ENCODE measurements at regions of chr7 and their contacts with region 1.

Region 1: DNA sequence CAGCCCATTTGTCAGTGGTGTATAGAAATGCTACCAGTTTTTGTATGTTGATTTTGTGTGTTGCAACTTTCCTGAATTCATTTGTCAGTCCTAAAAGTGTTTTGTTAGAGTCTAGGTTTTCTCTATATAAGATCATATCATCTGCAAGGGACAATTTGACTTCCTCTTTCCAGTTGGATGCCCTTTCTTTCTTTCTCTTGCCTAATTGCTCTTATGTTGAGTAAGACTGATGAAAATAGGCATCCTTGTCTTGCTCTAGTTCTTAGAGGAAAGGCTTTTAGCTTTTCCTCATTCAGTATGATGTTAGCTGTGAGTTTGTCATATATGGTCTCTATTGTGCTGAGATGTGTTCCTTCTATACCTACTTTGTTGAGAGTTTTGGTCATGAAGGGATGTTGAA is 161.7 kb upstream of the TPK1 start:
- DNase-seq: no peak
- ATAC-seq: no peak
- H3K4me3 Mint-ChIP-seq: no peak overlapping the region
- H3K27ac Mint-ChIP-seq: no peak overlapping the region
- H3K4me1 Mint-ChIP-seq: peaks cover 8% of the 10 kb centered on the region
- H3K27me3 Mint-ChIP-seq: no peaks in the 10 kb centered on the region

Region 2: GRCh38 chr7:144892761-144893160 is 104.8 kb before region 1 on chr7:
- CTCF ChIA-PET with region 1: no interaction called
- POLR2A ChIA-PET with region 1: interaction called, 10 read pairs
- intact Hi-C with region 1: no loop called
- DNase-seq: no peak
- ATAC-seq: no peak
- H3K4me3 Mint-ChIP-seq: no peak overlapping the region
- H3K27ac Mint-ChIP-seq: no peak overlapping the region
- H3K4me1 Mint-ChIP-seq: no peaks in the 10 kb centered on the region
- H3K27me3 Mint-ChIP-seq: no peaks in the 10 kb centered on the region